MCF 10A (cell line): ENCODE measurements at regions of chr11 and their contacts with region 1.

Region 1: DNA sequence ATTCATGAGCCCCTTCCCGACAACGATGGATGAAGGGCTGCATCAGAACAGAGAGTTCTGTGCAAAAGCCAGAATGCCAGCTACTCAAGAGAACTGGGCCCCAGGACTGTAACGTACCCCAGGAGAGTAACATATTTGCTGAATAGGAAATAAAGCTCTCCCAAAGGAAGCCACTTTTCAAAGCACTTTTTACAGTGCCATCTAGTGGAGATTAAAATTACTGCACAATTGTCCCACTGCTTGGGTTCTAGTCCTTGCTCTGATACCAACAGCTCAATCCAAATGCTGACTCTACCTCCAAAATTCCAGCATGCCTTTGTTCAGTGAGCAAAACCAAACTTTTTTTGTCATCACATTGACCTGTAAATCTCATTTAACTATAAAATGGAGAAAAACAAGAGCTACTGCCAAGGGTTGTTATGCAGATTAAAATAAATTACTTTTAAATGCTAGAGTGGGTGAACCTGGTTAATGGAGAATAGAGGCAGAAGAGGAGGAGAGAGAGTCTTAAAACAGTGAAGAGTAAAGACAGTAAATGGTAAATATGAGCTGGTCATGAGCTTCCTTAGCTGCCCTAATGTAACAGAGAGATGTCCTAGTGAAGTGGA is 87.6 kb upstream of the FSHB start:
- DNase-seq: peak; percentile 60
- H3K4me3 Mint-ChIP-seq: no peak overlapping the region
- H3K27ac Mint-ChIP-seq: no peak overlapping the region
- H3K4me1 Mint-ChIP-seq: no peaks in the 10 kb centered on the region
- H3K27me3 Mint-ChIP-seq: no peaks in the 10 kb centered on the region
- CTCF ChIP-seq: peak; percentile 75

Region 2: DNA sequence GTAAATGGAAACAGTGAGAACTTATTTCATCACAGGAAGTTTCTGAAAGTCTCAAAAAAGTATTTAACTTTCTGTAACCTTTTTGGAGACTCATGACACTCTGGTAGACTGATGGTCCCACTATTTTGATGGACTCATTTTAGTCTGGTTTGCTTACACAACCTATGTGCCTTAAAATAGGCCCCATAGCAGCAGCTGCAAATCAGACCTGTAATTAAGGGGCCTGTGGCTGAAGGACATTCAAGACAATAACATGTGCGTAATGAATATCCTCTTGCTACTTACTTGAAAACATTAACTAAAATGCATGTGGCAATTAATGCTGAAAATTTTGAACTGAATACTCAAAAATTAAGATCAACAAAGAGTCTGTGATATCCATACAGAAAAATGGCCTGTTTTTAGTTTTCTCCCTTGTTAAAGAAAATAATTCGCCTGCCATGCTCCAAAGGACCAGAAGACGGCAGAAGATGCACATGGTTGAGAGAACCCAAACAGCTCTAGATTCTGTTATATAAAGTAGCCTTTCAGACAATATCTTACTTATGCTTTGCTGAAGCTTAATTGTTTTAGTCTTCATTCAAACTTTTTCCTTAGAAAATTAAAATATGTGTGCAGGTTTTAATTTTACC is 694.8 kb before region 1 on chr11:
- CTCF ChIA-PET with region 1: interaction called, 39 read pairs
- POLR2A ChIA-PET with region 1: interaction called, 3 read pairs
- intact Hi-C with region 1: loop called (anchors 1 kb)
- DNase-seq: peak; percentile 30
- H3K4me3 Mint-ChIP-seq: no peak overlapping the region
- H3K27ac Mint-ChIP-seq: no peak overlapping the region
- H3K4me1 Mint-ChIP-seq: no peaks in the 10 kb centered on the region
- H3K27me3 Mint-ChIP-seq: no peaks in the 10 kb centered on the region
- CTCF ChIP-seq: peak; percentile 66

Region 3: DNA sequence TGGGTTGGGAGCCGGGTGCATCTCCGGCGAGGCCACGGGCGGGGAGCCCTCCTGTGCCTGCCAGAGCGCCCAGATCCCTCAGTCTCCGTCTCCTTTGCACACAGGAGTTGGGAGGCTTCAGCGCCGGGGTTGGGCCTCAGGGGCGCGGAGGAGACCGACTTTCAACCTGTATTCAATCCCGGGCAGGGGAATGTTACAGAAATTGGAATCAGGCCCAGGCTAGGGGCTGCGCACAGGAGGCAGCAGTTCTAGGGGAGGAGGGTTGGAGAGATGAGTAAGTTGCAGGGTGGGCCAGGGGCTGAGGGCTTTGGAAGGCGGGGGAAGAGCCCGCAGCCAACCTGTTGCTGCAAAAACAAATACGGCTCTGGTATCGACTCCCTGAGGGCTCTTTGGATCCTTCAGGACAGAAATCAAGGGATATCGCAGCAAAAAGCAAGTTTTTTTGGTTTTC is 125.7 kb before region 1 on chr11:
- CTCF ChIA-PET with region 1: no interaction called
- POLR2A ChIA-PET with region 1: no interaction called
- intact Hi-C with region 1: no loop called
- DNase-seq: no peak
- H3K4me3 Mint-ChIP-seq: no peak overlapping the region
- H3K27ac Mint-ChIP-seq: no peak overlapping the region
- H3K4me1 Mint-ChIP-seq: no peaks in the 10 kb centered on the region
- H3K27me3 Mint-ChIP-seq: no peaks in the 10 kb centered on the region
- CTCF ChIP-seq: no peak

Region 4: GRCh38 chr11:30155428-30155827 is 12.2 kb after region 1 on chr11:
- CTCF ChIA-PET with region 1: interaction called, 73 read pairs
- POLR2A ChIA-PET with region 1: interaction called, 3 read pairs
- intact Hi-C with region 1: no loop called
- DNase-seq: no peak
- H3K4me3 Mint-ChIP-seq: no peak overlapping the region
- H3K27ac Mint-ChIP-seq: no peak overlapping the region
- H3K4me1 Mint-ChIP-seq: peaks cover 15% of the 10 kb centered on the region
- H3K27me3 Mint-ChIP-seq: no peaks in the 10 kb centered on the region
- CTCF ChIP-seq: no peak

Region 5: DNA sequence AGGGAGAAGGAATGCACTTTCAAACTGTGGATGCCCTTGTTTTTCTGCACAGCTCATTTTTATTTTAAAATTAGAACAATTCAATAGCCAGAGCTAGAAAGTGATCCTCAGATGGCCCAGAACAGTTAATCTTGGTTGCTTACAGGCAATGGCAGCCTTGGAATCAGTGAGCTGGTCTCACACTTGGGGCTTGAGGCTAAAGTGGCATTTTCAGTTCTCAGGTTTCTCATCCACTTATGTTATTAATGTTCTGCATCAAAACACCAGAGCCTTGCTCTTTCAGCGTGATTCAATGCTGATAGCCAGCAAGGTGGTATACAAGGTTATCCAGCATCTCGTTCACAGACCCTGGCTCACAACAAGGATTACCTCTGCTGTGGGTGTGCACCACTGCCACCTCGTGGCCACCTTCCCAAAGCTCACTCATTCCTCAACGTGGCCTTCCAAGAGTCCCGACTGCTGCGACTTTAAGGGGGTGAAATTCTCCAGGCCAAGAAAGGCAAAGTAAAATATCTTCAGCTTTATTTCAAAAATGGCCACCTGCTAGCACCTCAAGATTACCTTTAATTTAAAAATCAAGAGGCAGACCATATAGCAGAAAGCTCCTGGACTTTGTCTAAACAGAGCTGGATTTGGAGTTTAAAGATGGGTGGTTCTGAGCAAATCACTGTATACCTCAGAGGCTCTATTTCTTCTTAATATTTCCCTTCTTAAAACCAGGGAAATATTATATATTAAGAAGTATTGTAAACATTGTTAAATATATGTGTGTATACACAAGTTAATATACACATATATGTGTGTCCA is 53.4 kb after region 1 on chr11:
- CTCF ChIA-PET with region 1: interaction called, 57 read pairs
- POLR2A ChIA-PET with region 1: no interaction called
- intact Hi-C with region 1: no loop called
- DNase-seq: peak; percentile 65
- H3K4me3 Mint-ChIP-seq: no peak overlapping the region
- H3K27ac Mint-ChIP-seq: peak overlapping the region; percentile 88
- H3K4me1 Mint-ChIP-seq: no peaks in the 10 kb centered on the region
- H3K27me3 Mint-ChIP-seq: no peaks in the 10 kb centered on the region
- CTCF ChIP-seq: peak; percentile 64

Region 6: GRCh38 chr11:30322826-30323710 is 179.9 kb after region 1 on chr11 and contains the start of gene ARL14EP:
- CTCF ChIA-PET with region 1: interaction called, 16 read pairs
- POLR2A ChIA-PET with region 1: interaction called, 3 read pairs
- intact Hi-C with region 1: no loop called
- DNase-seq: peak; percentile 95
- H3K4me3 Mint-ChIP-seq: peak within 1 kb of the TSS; percentile 96
- H3K27ac Mint-ChIP-seq: peak within 1 kb of the TSS; percentile 99
- H3K4me1 Mint-ChIP-seq: peaks cover 30% of the 10 kb centered on the region
- H3K27me3 Mint-ChIP-seq: peaks cover 21% of the 10 kb centered on the region
- CTCF ChIP-seq: no peak
- total RNA-seq, gene ARL14EP: 25.1 and 28.4 TPM in 2 replicates